ENCODE measurements at regions of chr17 and their contacts with region 1.

Region 1: DNA sequence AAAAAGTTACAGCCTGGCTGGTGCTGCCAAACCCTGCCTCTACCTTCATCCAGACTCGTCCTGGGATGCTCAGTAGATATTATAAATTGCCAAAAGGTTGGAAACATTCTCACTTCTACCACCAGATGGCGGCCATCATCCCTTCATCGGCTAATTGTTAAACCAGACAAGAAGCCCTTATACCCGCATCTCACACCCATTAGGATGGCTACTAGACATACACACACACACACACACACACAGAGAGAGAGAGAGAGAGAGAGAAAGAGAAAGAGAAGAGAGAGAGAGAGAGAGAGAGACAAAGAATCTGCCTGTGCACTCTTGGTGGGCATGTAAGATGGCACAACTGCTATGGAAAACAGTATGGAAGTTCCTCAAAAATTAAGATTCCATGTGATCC is 15.0 kb upstream of the SCIMP start:
- DNase-seq: peak; percentile 58
- ATAC-seq: peak; percentile 78
- H3K4me3 ChIP-seq: no peak overlapping the region
- H3K27ac ChIP-seq: no peak overlapping the region
- H3K4me1 ChIP-seq: no peaks in the 10 kb centered on the region
- H3K27me3 ChIP-seq: no peaks in the 10 kb centered on the region
- CTCF ChIP-seq: peak; percentile 82

Region 2: DNA sequence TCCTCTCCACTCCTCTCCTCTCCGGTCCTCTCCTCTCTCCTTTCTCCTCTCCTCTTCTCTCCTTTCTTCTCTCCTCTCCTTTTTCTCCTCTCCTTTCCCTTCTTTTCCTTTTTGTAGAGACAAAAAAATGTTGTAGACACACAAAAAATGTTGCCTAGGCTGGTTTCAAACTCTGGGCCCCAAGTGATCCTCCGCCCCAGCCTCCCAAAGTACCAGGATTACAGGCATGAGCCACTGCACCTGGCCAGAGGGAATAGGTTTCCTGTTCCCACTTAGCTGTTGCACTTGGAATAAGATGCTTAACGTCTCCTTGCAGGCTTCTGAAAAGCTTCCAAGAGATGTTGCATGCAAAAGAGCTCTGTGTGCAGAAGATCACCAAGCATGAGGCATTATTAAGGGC is 19.7 kb before region 1 on chr17:
- CTCF ChIA-PET with region 1: no interaction called
- POLR2A ChIA-PET with region 1: interaction called, 18 read pairs
- in situ Hi-C with region 1: no loop called
- intact Hi-C with region 1: no loop called
- DNase-seq: no peak
- ATAC-seq: no peak
- H3K4me3 ChIP-seq: no peak overlapping the region
- H3K27ac ChIP-seq: no peak overlapping the region
- H3K4me1 ChIP-seq: no peaks in the 10 kb centered on the region; the same call in 1 of the 2 replicates
- H3K27me3 ChIP-seq: no peaks in the 10 kb centered on the region
- CTCF ChIP-seq: no peak

Region 3: GRCh38 chr17:5272322-5272721 is 22.7 kb after region 1 on chr17:
- CTCF ChIA-PET with region 1: no interaction called
- POLR2A ChIA-PET with region 1: interaction called, 10 read pairs
- in situ Hi-C with region 1: no loop called
- intact Hi-C with region 1: no loop called
- DNase-seq: no peak
- ATAC-seq: no peak
- H3K4me3 ChIP-seq: no peak overlapping the region
- H3K27ac ChIP-seq: no peak overlapping the region
- H3K4me1 ChIP-seq: no peaks in the 10 kb centered on the region
- H3K27me3 ChIP-seq: no peaks in the 10 kb centered on the region
- CTCF ChIP-seq: no peak

Region 4: GRCh38 chr17:5391678-5392077 is 142.1 kb after region 1 on chr17:
- CTCF ChIA-PET with region 1: no interaction called
- POLR2A ChIA-PET with region 1: interaction called, 15 read pairs
- in situ Hi-C with region 1: no loop called
- intact Hi-C with region 1: no loop called
- DNase-seq: no peak
- ATAC-seq: no peak
- H3K4me3 ChIP-seq: no peak overlapping the region
- H3K27ac ChIP-seq: no peak overlapping the region
- H3K4me1 ChIP-seq: no peaks in the 10 kb centered on the region
- H3K27me3 ChIP-seq: no peaks in the 10 kb centered on the region
- CTCF ChIP-seq: no peak

Region 5: DNA sequence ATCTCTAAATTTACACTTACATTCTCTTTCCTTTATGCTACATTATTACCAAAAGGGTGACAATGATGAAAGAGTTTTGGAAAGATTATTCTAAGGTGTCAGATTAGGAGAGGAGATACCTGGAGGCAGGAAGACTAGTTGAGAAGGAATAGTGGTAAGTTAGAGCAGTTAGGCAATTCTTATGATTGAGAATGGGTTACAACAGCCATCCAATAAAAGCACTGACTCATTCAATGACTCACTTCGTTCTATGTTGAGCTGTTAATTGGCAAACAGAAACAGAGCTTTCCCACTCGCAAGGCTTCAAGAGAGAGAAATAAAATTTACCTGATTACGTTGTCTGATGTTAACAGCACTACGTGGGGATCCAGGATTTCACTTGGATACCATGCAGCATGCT is 164.1 kb after region 1 on chr17:
- CTCF ChIA-PET with region 1: no interaction called
- POLR2A ChIA-PET with region 1: no interaction called
- in situ Hi-C with region 1: no loop called
- intact Hi-C with region 1: no loop called
- DNase-seq: peak; percentile 95
- ATAC-seq: peak; percentile 92
- H3K4me3 ChIP-seq: 0 out of 4 replicates have a peak overlapping the region, but pooled peaks of 1 of the 2 experiments have one; percentile 23
- H3K27ac ChIP-seq: peak overlapping the region; percentile 78
- H3K4me1 ChIP-seq: peaks cover 30% of the 10 kb centered on the region
- H3K27me3 ChIP-seq: no peaks in the 10 kb centered on the region
- CTCF ChIP-seq: no peak

Region 6: GRCh38 chr17:6843241-6843880 is 1593.7 kb after region 1 on chr17:
- CTCF ChIA-PET with region 1: interaction called, 13 read pairs
- POLR2A ChIA-PET with region 1: no interaction called
- in situ Hi-C with region 1: no loop called
- intact Hi-C with region 1: no loop called
- DNase-seq: peak; percentile 25
- ATAC-seq: no peak
- H3K4me3 ChIP-seq: no peak overlapping the region
- H3K27ac ChIP-seq: no peak overlapping the region
- H3K4me1 ChIP-seq: no peaks in the 10 kb centered on the region
- H3K27me3 ChIP-seq: peaks cover 9% of the 10 kb centered on the region
- CTCF ChIP-seq: peak; percentile 63; the same call in 1 of the 2 replicates

Measured in Panc1 (cell line).